Activated CD8-positive, alpha-beta T cell treated with anti-CD3 and anti-CD28 coated beads, Interleukin-2, amount 10 ng/mL, durations not matched to agents 7 days and 5 days (primary cell): ENCODE measurements at regions of chr18 and their contacts with region 1.

Region 1: GRCh38 chr18:54671291-54671881 is 80.3 kb downstream of the DYNAP start:
- DNase-seq: no peak
- ATAC-seq: no peak
- H3K4me3 Mint-ChIP-seq: no peak overlapping the region
- H3K27ac Mint-ChIP-seq: no peak overlapping the region
- H3K4me1 Mint-ChIP-seq: no peaks in the 10 kb centered on the region
- H3K27me3 Mint-ChIP-seq: peaks cover 9% of the 10 kb centered on the region

Region 2: GRCh38 chr18:54444319-54444914 is 227.0 kb before region 1 on chr18:
- CTCF ChIA-PET with region 1: interaction called, 14 read pairs
- POLR2A ChIA-PET with region 1: no interaction called
- DNase-seq: peak; percentile 44
- ATAC-seq: no peak
- H3K4me3 Mint-ChIP-seq: no peak overlapping the region
- H3K27ac Mint-ChIP-seq: no peak overlapping the region
- H3K4me1 Mint-ChIP-seq: no peaks in the 10 kb centered on the region
- H3K27me3 Mint-ChIP-seq: peaks cover 8% of the 10 kb centered on the region